ENCODE measurements at regions of chr9 and their contacts with region 1.

Region 1: DNA sequence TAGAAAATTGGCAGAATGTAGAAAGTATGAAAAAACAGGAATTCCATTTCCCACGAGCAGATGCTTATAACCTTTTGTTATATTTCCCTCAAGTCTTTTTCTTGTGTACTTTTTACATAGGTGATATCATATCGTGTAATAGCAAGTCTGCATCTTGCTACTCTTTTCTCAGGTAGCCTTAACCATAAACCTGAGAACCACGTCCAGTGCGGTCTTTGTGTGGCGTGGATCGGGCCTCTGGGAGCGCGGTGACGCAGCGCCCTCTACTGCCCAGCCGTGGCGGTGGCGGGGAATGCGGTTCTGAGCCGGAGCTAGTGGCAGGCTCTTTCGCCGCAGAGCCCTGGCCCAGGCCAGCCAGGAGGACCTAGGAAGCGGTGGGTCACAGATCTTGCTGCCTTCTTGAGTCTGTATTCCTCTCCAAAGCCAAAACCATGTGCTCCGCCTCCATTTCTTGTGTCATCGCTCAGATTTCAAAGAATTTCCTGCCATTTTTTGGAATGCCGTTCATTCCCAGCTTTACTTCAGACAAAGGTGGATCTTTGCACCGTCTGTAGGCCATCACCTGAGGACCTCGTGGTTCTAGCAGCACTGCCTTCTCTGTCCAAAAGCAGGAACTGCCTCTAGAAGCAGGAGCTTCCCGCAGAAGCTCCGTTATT is 71.9 kb downstream of the MVB12B start:
- DNase-seq: peak; percentile 69
- H3K4me3 ChIP-seq: no peak overlapping the region
- H3K27ac ChIP-seq: no peak overlapping the region
- H3K4me1 ChIP-seq: no peaks in the 10 kb centered on the region
- H3K27me3 ChIP-seq: no peaks in the 10 kb centered on the region
- CTCF ChIP-seq: peak; percentile 98
- POLR2A ChIP-seq: no peak

Region 2: GRCh38 chr9:126228781-126229444 is 169.6 kb before region 1 on chr9:
- CTCF ChIA-PET with region 1: interaction called, 10 read pairs
- POLR2A ChIA-PET with region 1: no interaction called
- dilution Hi-C with region 1: no loop called
- intact Hi-C with region 1: loop called (anchors 2 kb)
- DNase-seq: peak; percentile 60
- H3K4me3 ChIP-seq: no peak overlapping the region
- H3K27ac ChIP-seq: no peak overlapping the region
- H3K4me1 ChIP-seq: no peaks in the 10 kb centered on the region
- H3K27me3 ChIP-seq: peaks cover 2 to 5% of the 10 kb centered on the region in 2 experiments
- CTCF ChIP-seq: peak; percentile 83 to 95
- POLR2A ChIP-seq: no peak

Region 3: GRCh38 chr9:126307322-126308061 is 91.0 kb before region 1 on chr9:
- CTCF ChIA-PET with region 1: interaction called, 225 read pairs
- POLR2A ChIA-PET with region 1: no interaction called
- dilution Hi-C with region 1: no loop called
- intact Hi-C with region 1: loop called (anchors 1 kb)
- DNase-seq: no peak
- H3K4me3 ChIP-seq: no peak overlapping the region
- H3K27ac ChIP-seq: no peak overlapping the region
- H3K4me1 ChIP-seq: no peaks in the 10 kb centered on the region
- H3K27me3 ChIP-seq: peaks cover 0 to 5% of the 10 kb centered on the region in 2 experiments
- CTCF ChIP-seq: no peak
- POLR2A ChIP-seq: no peak

Region 4: DNA sequence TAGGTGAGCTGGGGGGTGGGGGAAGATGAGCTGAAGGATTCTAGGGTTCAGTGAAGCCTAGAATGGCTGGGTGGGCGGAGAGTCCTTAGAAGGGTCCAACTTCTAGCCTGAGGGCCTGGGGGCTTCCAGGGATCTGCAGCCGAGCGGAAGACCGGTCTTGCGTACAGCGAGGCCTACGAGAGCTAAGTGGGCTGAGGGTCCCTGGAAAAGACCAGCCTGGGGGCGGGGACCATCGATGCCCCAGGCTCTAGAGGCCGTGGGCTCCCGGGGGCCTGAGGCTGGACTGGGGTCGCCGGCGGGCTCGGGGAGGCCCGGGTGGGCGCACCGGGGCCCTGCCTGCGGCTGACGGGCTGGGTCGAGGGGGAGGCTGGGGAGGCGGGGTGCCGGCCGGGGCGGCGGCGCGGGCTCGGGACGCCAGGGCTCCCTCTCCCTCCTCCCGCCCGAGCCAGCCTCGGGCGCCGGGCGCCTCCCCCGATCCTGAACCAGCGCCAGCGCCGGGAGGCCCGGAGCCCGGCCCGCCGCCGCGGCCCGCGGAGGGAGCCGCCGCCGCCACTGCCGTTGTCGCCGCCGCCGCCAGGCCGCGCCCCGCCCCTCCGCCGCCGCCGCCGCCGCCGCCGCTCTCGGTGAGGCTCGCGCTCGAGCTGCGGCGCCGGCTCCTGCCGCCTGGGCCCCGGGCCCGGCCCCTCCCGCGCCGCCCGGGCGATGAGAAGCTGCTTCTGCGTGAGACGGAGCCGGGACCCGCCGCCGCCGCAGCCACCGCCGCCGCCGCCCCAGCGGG is 72.1 kb before region 1 on chr9 and contains the start of gene MVB12B:
- CTCF ChIA-PET with region 1: interaction called, 39 read pairs
- POLR2A ChIA-PET with region 1: no interaction called
- dilution Hi-C with region 1: no loop called
- intact Hi-C with region 1: no loop called
- DNase-seq: peak; percentile 37
- H3K4me3 ChIP-seq: peak within 1 kb of the TSS in 2 of 3 experiments; percentile 41 to 53
- H3K27ac ChIP-seq: peak within 1 kb of the TSS; percentile 41
- H3K4me1 ChIP-seq: peaks cover 4% of the 10 kb centered on the region
- H3K27me3 ChIP-seq: no peaks in the 10 kb centered on the region
- CTCF ChIP-seq: no peak
- POLR2A ChIP-seq: no peak
- total RNA-seq, gene MVB12B: 13.2 and 17.3 TPM in 2 replicates

Region 5: DNA sequence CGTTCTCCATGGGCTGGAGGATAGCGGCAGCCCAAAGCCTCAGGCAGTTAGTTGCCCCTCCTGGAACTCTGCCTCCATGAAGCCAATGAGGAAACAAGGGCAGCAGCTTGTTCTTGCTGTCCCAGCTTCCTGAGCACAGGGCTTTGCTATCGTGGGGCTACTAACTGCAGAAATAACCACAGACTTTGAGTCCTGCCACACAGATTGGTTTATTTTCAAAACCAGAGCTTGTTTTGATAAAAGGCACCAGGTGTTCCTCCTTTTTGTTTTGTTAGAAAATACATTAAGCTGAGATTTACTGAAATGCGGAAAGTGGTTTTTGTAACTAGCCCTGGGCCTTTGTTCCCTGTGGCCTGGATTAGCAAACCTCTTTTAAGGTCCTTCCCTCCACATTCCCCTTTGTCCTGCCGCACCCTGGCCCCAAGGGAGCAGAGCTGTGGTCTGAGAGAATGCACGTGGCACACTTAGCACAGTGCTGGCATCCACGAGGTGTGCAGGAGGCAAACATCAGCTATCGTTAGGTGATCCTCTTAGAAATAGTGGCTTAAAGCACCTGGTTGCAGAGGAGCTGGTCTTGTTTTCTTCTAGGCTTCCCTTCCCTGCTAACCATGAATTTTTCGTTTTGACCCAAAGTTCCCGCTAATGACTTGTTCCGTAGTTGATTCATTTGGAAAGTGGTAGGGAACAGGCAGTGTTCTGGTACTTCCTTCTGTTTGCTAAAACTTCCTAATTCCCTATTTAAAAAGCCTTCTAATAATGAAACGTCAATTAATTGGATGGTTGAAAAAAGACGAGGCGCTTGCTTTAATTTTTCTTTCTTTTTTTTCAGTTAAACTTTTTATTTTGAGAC is 50.4 kb before region 1 on chr9:
- CTCF ChIA-PET with region 1: interaction called, 10 read pairs
- POLR2A ChIA-PET with region 1: no interaction called
- dilution Hi-C with region 1: no loop called
- intact Hi-C with region 1: no loop called
- DNase-seq: no peak
- H3K4me3 ChIP-seq: no peak overlapping the region
- H3K27ac ChIP-seq: no peak overlapping the region
- H3K4me1 ChIP-seq: no peaks in the 10 kb centered on the region
- H3K27me3 ChIP-seq: no peaks in the 10 kb centered on the region
- CTCF ChIP-seq: no peak
- POLR2A ChIP-seq: no peak

Region 6: GRCh38 chr9:126386088-126386487 is 12.4 kb before region 1 on chr9:
- CTCF ChIA-PET with region 1: interaction called, 48 read pairs
- POLR2A ChIA-PET with region 1: no interaction called
- dilution Hi-C with region 1: no loop called
- intact Hi-C with region 1: no loop called
- DNase-seq: peak; percentile 49
- H3K4me3 ChIP-seq: no peak overlapping the region
- H3K27ac ChIP-seq: no peak overlapping the region
- H3K4me1 ChIP-seq: peaks cover 17% of the 10 kb centered on the region
- H3K27me3 ChIP-seq: no peaks in the 10 kb centered on the region
- CTCF ChIP-seq: peak; percentile 23 to 53
- POLR2A ChIP-seq: no peak

Region 7: GRCh38 chr9:126490871-126491567 is 92.5 kb after region 1 on chr9:
- CTCF ChIA-PET with region 1: interaction called, 91 read pairs
- POLR2A ChIA-PET with region 1: no interaction called
- dilution Hi-C with region 1: no loop called
- intact Hi-C with region 1: loop called (anchors 1 kb)
- DNase-seq: peak; percentile 65
- H3K4me3 ChIP-seq: no peak overlapping the region
- H3K27ac ChIP-seq: no peak overlapping the region
- H3K4me1 ChIP-seq: no peaks in the 10 kb centered on the region
- H3K27me3 ChIP-seq: no peaks in the 10 kb centered on the region
- CTCF ChIP-seq: peak; percentile 70 to 79
- POLR2A ChIP-seq: no peak

Measured in endothelial cell of umbilical vein (primary cell).